Body of pancreas (tissue), 4 donors: ENCODE measurements at regions of chr18 and their contacts with region 1.

Region 1: DNA sequence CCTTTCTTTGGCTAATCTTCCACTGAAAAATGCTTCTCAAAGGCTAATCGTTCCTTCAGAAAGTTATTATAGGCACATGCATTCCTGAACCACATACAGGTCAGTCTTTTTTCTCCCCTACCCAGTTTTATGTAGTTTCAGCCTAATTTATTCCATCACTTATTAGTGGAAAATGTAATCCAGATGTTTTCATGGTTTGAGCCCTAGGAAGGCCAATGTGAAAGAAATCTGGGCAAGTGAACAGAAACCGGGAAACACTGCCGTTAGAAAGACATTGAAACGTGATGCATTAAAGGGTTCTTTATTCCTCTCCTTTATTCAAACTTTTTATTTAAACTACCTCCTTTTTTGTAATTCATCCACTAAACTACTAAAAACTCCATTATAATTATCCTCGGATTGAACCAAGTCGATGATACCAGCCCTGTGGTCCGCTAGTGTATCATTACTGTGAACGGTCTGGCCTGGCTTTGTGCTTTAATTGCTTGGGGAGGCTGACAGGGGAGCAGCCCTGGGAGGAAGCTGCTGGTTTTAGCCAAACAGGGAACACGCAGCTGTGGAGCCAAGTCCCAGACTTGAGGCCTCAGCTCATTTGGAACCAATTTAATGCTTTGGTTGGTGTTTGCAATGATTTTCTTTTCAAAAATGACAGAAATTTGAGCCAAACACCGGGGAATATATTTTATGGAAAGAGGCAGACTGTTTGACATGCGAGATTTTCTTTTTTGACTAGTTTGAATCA is 149.2 kb downstream of the ARHGAP28 start:
- DNase-seq: no peak
- ATAC-seq: no peak
- H3K4me3 ChIP-seq: no peak overlapping the region
- H3K27ac ChIP-seq: no peak overlapping the region
- H3K4me1 ChIP-seq: no peaks in the 10 kb centered on the region
- H3K27me3 ChIP-seq: no peaks in the 10 kb centered on the region
- CTCF ChIP-seq: no peak
- POLR2A ChIP-seq: no peak

Region 2: GRCh38 chr18:6741232-6741663 is 137.5 kb before region 1 on chr18:
- intact Hi-C with region 1: loop called (anchors 10 kb)
- DNase-seq: peak in 1 of 4 donors; percentile 55
- ATAC-seq: peak; percentile 88
- H3K4me3 ChIP-seq: no peak overlapping the region
- H3K27ac ChIP-seq: peak overlapping the region in 1 of 4 donors; percentile 3
- H3K4me1 ChIP-seq: peaks cover 13% of the 10 kb centered on the region
- H3K27me3 ChIP-seq: no peaks in the 10 kb centered on the region
- CTCF ChIP-seq: no peak
- POLR2A ChIP-seq: no peak

Region 3: GRCh38 chr18:7524786-7525185 is 646.1 kb after region 1 on chr18:
- intact Hi-C with region 1: no loop called
- DNase-seq: peak in 1 of 4 donors; percentile 9
- ATAC-seq: no peak
- H3K4me3 ChIP-seq: no peak overlapping the region
- H3K27ac ChIP-seq: no peak overlapping the region
- H3K4me1 ChIP-seq: no peaks in the 10 kb centered on the region
- H3K27me3 ChIP-seq: no peaks in the 10 kb centered on the region
- CTCF ChIP-seq: no peak
- POLR2A ChIP-seq: no peak